Posterior cingulate gyrus (tissue), 11 donors: ENCODE measurements at regions of chr1 and their contacts with region 1.

Region 1: GRCh38 chr1:30085811-30086770 is 637.3 kb downstream of the MATN1 start:
- DNase-seq: peak; percentile 33 to 93 (median 58)

Region 2: GRCh38 chr1:29912425-29912824 is 173.7 kb before region 1 on chr1:
- intact Hi-C with region 1: loop called (anchors 10 kb)
- DNase-seq: no peak

Region 3: GRCh38 chr1:29984538-29985357 is 101.3 kb before region 1 on chr1:
- intact Hi-C with region 1: no loop called
- DNase-seq: no peak